ENCODE measurements at regions of chr21 and their contacts with region 1.

Region 1: DNA sequence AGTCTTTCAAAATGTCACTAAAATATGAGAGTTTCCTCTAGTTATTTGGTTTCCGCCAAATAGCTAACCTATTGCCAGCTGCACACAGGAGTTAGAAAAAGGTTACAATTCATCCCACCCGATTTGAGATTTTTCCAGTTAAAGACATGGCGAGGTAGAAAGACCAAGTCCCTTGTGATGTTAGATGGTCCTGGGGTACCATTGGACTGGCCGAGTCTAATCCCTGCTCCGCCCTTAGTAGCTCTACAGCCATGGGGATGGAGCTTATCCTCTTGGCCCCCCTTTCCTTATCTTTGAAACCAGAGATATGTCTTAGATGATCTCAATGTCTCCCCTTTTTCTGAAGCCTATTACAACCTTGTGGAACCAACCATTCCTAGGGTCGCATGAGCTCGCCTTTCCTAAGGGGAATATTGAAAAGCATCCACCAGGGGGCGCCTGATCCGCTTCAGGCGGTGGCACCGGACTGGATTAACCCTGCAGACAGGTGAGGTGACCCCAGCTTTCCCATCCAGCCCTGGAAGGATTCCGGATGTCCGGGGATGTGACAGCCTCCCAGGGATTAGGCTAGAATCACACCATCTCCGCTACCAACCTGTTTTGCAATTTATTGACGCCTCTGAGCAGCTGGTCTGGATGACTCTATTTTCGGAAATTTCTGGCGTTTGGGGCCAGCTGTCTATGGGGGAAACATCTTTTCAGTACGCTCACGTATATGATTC is 68.3 kb upstream of the SIM2 start:
- DNase-seq: peak; percentile 39 to 41
- ATAC-seq: peak in 3 of 8 donors; percentile 33 to 41 (median 37)
- H3K4me3 ChIP-seq: no peak overlapping the region
- H3K27ac ChIP-seq: no peak overlapping the region
- H3K4me1 ChIP-seq: no peaks in the 10 kb centered on the region
- H3K27me3 ChIP-seq: peaks cover 0 to 57% (median 34%) of the 10 kb centered on the region in 7 donors
- CTCF ChIP-seq: peak; percentile 51 to 82 (median 70)

Region 2: GRCh38 chr21:36504067-36505058 is 126.3 kb before region 1 on chr21:
- intact Hi-C with region 1: loop called in 1 of 10 experiments (anchors 10 kb)
- DNase-seq: peak in 1 of 2 donors; percentile 28
- ATAC-seq: no peak
- H3K4me3 ChIP-seq: no peak overlapping the region
- H3K27ac ChIP-seq: no peak overlapping the region
- H3K4me1 ChIP-seq: no peaks in the 10 kb centered on the region
- H3K27me3 ChIP-seq: peaks cover 0 to 35% (median 6%) of the 10 kb centered on the region in 7 donors
- CTCF ChIP-seq: peak in 8 of 9 donors; percentile 85 to 96 (median 94)

Region 3: GRCh38 chr21:36854391-36854790 is 223.7 kb after region 1 on chr21:
- intact Hi-C with region 1: loop called in 2 of 10 experiments (anchors 10 kb)
- DNase-seq: peak in 1 of 2 donors; percentile 41
- ATAC-seq: peak; percentile 38 to 86 (median 66)
- H3K4me3 ChIP-seq: no peak overlapping the region
- H3K27ac ChIP-seq: no peak overlapping the region
- H3K4me1 ChIP-seq: peaks cover 0 to 9% (median 0%) of the 10 kb centered on the region in 9 donors
- H3K27me3 ChIP-seq: no peaks in the 10 kb centered on the region
- CTCF ChIP-seq: peak; percentile 32 to 79 (median 66)